ENCODE measurements at regions of chr15 and their contacts with region 1.

Region 1: DNA sequence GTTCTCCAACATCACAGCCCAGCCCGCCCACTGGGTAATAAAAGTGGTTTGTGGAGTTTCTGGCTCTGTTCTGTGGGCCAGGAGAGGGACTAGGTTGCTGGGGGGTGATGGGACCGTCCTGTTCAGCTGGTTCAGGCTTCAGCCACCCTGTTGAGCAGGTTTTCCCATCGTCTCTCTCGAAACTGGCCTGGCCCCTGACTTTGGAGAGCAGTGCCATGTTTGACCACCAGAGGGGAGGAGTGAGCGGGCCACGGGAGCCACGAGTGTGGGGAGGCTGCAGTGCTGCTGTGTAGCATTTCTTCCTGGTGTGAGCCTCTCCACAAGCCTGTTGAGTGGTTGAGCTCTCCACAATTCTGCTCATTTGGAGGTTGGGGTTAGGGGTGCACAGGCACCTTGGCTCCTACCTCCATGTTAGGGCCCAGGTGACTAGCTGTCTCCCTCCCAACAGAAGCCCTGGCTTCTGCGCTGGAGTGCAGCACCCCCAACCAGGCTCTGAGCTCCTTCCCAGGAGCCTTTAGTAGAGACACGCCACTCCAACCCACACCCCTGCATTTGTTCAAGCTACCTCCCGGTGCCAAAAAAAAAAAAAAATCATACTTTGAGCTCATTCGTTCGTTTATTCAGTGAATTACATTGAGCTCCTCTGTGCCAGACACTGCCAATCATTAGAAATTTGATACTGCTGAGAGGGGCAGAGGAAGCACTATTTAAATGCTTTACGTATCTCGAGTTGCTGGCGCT is 13.9 kb downstream of the SPINT1 start:
- DNase-seq: peak; percentile 85
- H3K4me3 Mint-ChIP-seq: no peak overlapping the region
- H3K27ac Mint-ChIP-seq: no peak overlapping the region
- H3K4me1 Mint-ChIP-seq: peaks cover 11% of the 10 kb centered on the region
- H3K27me3 Mint-ChIP-seq: no peaks in the 10 kb centered on the region

Region 2: GRCh38 chr15:40847205-40847961 is 10.4 kb before region 1 on chr15:
- CTCF ChIA-PET with region 1: interaction called, 76 read pairs
- intact Hi-C with region 1: no loop called
- DNase-seq: no peak
- H3K4me3 Mint-ChIP-seq: no peak overlapping the region
- H3K27ac Mint-ChIP-seq: no peak overlapping the region
- H3K4me1 Mint-ChIP-seq: peaks cover 21% of the 10 kb centered on the region
- H3K27me3 Mint-ChIP-seq: peaks cover 8% of the 10 kb centered on the region

Region 3: DNA sequence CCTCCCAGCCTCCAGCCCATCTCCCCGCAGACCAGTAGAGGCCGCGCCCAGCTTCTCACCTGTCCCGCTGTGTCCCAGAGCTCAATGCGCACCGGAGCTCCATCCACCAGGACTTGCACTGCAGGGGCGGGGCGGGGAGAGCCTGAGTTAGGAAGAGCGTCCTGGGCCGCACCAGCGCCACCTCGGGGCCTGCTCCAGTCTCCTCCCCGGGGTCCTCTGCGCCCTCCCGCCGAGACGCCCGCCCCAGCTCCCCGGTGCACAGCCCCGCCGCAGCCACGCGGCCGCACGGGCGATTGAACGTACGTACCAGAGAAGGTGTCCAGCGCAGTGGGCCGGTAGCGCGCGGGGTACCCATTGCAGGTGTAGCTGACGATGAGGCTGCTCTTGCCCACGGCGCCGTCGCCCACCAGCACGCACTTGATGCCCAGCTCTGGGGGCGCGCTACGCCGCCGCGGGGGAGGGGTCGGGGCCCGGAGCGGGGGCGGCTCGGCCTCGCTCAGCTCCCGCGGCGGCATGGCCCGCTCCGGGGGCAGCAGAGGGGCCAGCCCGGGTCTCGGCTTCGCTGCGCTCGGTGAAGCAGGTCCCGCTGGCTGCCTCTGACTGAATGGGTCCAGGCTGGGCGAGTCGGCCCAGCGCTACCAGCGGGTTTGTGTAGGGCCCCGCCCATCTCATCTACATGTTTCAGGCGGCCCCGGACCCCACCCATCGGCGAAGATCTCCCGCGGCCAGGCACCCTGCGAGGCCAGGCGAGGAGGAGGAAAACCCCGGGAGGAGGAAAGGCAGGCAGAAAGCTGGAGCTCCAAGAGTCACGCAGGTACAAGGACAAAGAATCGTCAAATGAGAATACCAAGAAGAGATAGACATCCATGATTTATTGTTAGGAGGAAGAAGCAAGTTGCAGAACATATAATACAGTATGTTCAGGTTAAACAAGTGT is 16.1 kb after region 1 on chr15 and contains the start of gene RHOV:
- CTCF ChIA-PET with region 1: no interaction called
- intact Hi-C with region 1: loop called (anchors 2 kb)
- DNase-seq: peak; percentile 61
- H3K4me3 Mint-ChIP-seq: peak within 1 kb of the TSS; percentile 73
- H3K27ac Mint-ChIP-seq: no peak within 1 kb of the TSS
- H3K4me1 Mint-ChIP-seq: peaks cover 19% of the 10 kb centered on the region
- H3K27me3 Mint-ChIP-seq: peaks cover 10% of the 10 kb centered on the region
- total RNA-seq, gene RHOV: 0.22 TPM in 1 of 2 experiments, not detected in the other

Measured in activated naive CD4-positive, alpha-beta T cell treated with anti-CD3 and anti-CD28 coated beads for 36 hours (primary cell).